ENCODE measurements at regions of chr19 and their contacts with region 1.

Region 1: GRCh38 chr19:35545001-35545911 is at the start of gene TMEM147:
- DNase-seq: peak; percentile 68 to 76 (median 73)
- H3K4me3 ChIP-seq: peak within 1 kb of the TSS; percentile 36 to 84
- H3K4me3 Mint-ChIP-seq: peak within 1 kb of the TSS; percentile 87 to 92 (median 90)
- H3K27ac ChIP-seq: peak within 1 kb of the TSS; percentile 76
- H3K27ac Mint-ChIP-seq: peak within 1 kb of the TSS; percentile 87 to 96 (median 93)
- H3K4me1 ChIP-seq: peaks cover 24% of the 10 kb centered on the region
- H3K4me1 Mint-ChIP-seq: peaks cover 23 to 46% (median 33%) of the 10 kb centered on the region in 4 donors
- H3K27me3 ChIP-seq: no peaks in the 10 kb centered on the region
- H3K27me3 Mint-ChIP-seq: no peaks in the 10 kb centered on the region
- total RNA-seq, gene TMEM147: 41.3 to 41.9 TPM

Region 2: DNA sequence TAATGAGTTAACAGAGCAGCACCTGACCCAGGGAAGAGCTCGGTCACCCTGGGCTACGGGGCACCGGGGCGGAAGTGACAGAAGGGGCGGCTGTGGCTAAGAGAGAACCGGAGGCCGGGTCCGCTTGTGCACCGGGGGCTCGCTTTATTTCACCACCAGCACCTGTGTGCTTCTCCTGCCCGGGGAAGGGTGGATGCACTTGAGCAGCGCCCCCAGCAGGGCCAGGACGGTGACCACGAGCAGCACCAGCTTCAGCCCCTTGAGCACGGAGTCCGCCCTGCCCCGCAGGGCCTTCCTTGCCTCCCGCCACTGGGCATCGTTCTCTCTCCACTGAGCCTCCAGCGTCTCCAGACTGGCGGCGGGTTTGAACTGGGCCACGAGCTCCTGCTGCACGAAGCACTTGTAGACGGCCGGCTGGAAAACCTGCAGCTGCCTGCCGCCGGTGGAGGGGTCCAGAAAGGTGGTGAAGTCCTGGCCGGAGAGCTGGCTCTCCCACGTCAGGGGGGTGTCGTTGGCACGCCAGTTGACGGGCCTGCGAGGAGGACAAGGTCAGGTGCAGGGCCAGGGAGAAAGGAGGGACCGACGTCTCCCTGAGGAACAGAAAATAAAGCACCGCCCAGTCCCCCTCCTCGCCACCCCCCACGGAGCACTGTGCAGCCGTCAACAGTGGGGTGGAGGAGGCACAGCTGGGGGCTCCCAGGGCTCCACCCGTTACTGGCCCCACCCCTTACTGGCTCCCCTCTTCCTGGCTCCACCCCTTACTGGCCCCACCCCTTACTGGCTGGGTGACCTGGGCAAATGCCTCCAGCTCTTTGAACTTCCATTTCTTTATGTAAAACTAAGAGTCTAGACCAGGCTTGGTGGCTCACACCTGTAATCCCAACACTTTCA is 320.3 kb before region 1 on chr19:
- CTCF ChIA-PET with region 1: no interaction called
- POLR2A ChIA-PET with region 1: no interaction called
- intact Hi-C with region 1: no loop called
- DNase-seq: no peak
- H3K4me3 ChIP-seq: no peak overlapping the region
- H3K4me3 Mint-ChIP-seq: no peak overlapping the region
- H3K27ac ChIP-seq: no peak overlapping the region
- H3K27ac Mint-ChIP-seq: peak overlapping the region in 2 of 7 donors; percentile 32 to 35
- H3K4me1 ChIP-seq: peaks cover 44% of the 10 kb centered on the region
- H3K4me1 Mint-ChIP-seq: peaks cover 6 to 45% (median 26%) of the 10 kb centered on the region in 4 donors
- H3K27me3 ChIP-seq: no peaks in the 10 kb centered on the region
- H3K27me3 Mint-ChIP-seq: no peaks in the 10 kb centered on the region

Region 3: GRCh38 chr19:35330475-35330874 is 214.8 kb before region 1 on chr19:
- CTCF ChIA-PET with region 1: no interaction called
- POLR2A ChIA-PET with region 1: no interaction called
- intact Hi-C with region 1: no loop called
- DNase-seq: peak in 1 of 5 donors; percentile 18
- H3K4me3 ChIP-seq: no peak overlapping the region
- H3K4me3 Mint-ChIP-seq: no peak overlapping the region
- H3K27ac ChIP-seq: no peak overlapping the region
- H3K27ac Mint-ChIP-seq: no peak overlapping the region
- H3K4me1 ChIP-seq: peaks cover 9% of the 10 kb centered on the region
- H3K4me1 Mint-ChIP-seq: peaks cover 6 to 15% (median 10%) of the 10 kb centered on the region in 4 donors
- H3K27me3 ChIP-seq: no peaks in the 10 kb centered on the region
- H3K27me3 Mint-ChIP-seq: peaks cover 7 to 22% of the 10 kb centered on the region in 2 donors

Region 4: DNA sequence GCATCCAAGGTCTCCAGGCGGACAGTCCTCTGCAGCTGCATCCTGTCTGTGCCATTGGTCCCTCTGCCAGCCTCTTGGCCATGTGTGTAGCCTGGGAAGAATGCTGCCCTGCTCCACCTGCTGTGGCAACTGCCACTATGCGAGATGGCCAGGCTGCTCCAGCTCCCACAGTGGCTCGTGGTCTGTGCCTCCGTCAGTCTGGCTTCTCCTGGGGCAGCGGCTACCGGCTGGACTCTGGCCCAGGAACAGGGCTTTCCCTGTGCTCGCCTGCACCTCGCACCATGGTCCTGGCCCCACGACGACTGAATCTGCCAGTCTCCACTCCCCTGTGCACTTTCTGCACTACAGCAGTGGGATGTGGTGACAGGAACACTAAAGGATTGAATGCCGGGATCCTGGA is 123.9 kb before region 1 on chr19:
- CTCF ChIA-PET with region 1: no interaction called
- POLR2A ChIA-PET with region 1: no interaction called
- intact Hi-C with region 1: no loop called
- DNase-seq: no peak
- H3K4me3 ChIP-seq: no peak overlapping the region
- H3K4me3 Mint-ChIP-seq: no peak overlapping the region
- H3K27ac ChIP-seq: no peak overlapping the region
- H3K27ac Mint-ChIP-seq: no peak overlapping the region
- H3K4me1 ChIP-seq: no peaks in the 10 kb centered on the region
- H3K4me1 Mint-ChIP-seq: no peaks in the 10 kb centered on the region
- H3K27me3 ChIP-seq: peaks cover 8% of the 10 kb centered on the region
- H3K27me3 Mint-ChIP-seq: peaks cover 3 to 8% of the 10 kb centered on the region in 2 donors

Region 5: DNA sequence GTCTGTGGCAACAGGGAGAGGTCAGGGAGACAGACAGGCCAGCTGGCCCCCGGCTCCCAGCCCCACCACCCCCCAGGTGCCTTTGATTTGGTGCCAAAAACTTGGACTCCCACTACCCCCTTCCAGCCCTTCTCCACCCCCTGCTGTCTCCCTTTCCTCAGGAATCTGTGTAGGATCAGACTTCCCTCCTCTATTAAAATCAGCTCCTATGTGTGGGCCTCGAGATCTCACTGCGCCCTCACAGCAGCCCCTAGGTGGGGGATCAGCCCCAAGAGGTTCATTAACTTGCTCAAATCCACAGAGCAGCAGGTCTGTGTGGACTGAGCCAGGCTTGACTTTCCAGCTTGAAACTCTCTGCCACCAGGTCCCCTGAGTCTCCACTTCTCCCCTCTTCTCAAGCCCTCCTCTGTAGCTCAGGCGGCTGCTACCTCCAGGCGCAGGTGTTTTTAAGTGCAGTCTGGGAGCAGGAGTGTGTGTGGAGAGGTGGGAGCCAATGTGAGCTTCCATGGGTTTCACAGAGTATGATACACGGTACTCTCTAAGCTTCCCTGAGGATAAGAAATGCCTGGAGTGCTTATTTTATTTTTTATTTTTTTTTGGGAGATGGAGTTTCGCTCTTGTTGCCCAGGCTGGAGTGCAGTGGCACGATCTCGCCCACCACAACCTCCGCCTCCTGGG is 10.3 kb before region 1 on chr19:
- CTCF ChIA-PET with region 1: interaction called, 13 read pairs
- POLR2A ChIA-PET with region 1: interaction called, 3 read pairs
- intact Hi-C with region 1: no loop called
- DNase-seq: no peak
- H3K4me3 ChIP-seq: no peak overlapping the region
- H3K4me3 Mint-ChIP-seq: no peak overlapping the region
- H3K27ac ChIP-seq: no peak overlapping the region
- H3K27ac Mint-ChIP-seq: peak overlapping the region in 1 of 7 donors; percentile 35
- H3K4me1 ChIP-seq: peaks cover 13% of the 10 kb centered on the region
- H3K4me1 Mint-ChIP-seq: peaks cover 7 to 17% (median 12%) of the 10 kb centered on the region in 4 donors
- H3K27me3 ChIP-seq: no peaks in the 10 kb centered on the region
- H3K27me3 Mint-ChIP-seq: peaks cover 17 to 19% of the 10 kb centered on the region in 2 donors

Region 6: DNA sequence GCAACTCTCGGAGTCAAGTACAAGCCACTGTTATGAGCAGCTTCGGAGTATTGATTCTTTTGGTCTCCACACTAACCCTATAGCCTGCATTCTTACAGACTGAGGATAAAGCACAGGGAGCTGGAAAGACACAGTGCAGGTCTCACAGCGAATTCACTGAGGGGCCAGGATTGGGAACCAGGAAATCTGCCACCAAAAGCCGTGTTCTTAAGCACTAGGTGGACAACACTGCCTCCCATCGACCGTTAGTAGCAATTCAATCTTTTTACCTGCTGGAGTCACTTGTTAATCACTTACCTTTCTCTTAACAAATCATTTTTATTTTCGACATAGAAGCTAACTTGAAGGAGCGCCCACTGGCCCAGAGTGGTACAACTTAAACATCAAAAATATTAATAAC is 47.0 kb after region 1 on chr19:
- CTCF ChIA-PET with region 1: interaction called, 13 read pairs
- POLR2A ChIA-PET with region 1: no interaction called
- intact Hi-C with region 1: no loop called
- DNase-seq: peak in 4 of 5 donors; percentile 14 to 34 (median 22)
- H3K4me3 ChIP-seq: no peak overlapping the region
- H3K4me3 Mint-ChIP-seq: no peak overlapping the region
- H3K27ac ChIP-seq: no peak overlapping the region
- H3K27ac Mint-ChIP-seq: no peak overlapping the region
- H3K4me1 ChIP-seq: no peaks in the 10 kb centered on the region
- H3K4me1 Mint-ChIP-seq: peaks cover 0 to 2% (median 1%) of the 10 kb centered on the region in 4 donors
- H3K27me3 ChIP-seq: no peaks in the 10 kb centered on the region
- H3K27me3 Mint-ChIP-seq: peaks cover 3 to 4% of the 10 kb centered on the region in 2 donors

Region 7: DNA sequence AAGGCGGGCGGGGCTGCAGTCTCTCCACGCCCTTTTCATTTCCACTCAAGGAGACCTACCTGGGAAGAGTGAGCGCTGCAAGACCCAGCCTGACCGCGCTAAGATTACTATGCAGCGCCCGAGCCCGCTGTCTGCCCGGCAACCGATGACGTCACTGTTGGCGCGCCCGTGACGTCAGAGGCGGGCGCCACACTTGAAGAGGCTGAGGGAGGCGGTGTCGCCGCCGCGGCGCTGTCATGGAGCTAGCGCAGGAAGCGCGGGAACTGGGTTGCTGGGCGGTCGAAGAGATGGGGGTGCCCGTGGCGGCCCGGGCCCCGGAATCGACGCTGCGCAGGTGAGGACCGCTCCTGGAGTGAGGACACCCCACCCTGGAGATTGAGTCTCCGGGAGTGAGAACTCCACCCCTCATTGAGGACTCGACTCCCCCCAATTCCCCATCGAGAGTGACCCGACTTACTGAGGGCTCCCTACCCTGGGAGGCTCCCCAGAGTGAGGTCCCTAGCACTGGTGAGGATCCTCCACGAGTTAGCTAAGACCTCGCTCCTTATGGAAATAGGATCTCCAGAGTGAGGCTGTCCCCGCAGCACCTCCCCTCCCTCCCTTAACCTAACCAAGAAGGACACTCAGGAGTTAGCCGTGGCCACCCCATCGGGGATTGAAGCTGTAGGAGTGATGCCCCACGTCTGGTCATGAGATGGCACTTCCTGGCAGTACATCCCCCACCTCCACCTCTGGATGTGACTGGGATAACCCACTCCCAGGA is 67.5 kb after region 1 on chr19 and contains the start of gene HAUS5:
- CTCF ChIA-PET with region 1: interaction called, 7 read pairs
- POLR2A ChIA-PET with region 1: interaction called, 3 read pairs
- intact Hi-C with region 1: loop called (anchors 1 kb)
- DNase-seq: peak; percentile 91 to 96 (median 94)
- H3K4me3 ChIP-seq: peak within 1 kb of the TSS; percentile 74 to 89
- H3K4me3 Mint-ChIP-seq: peak within 1 kb of the TSS; percentile 82 to 96 (median 86)
- H3K27ac ChIP-seq: peak within 1 kb of the TSS; percentile 72
- H3K27ac Mint-ChIP-seq: peak within 1 kb of the TSS; percentile 85 to 98 (median 95)
- H3K4me1 ChIP-seq: peaks cover 39% of the 10 kb centered on the region
- H3K4me1 Mint-ChIP-seq: peaks cover 17 to 53% (median 28%) of the 10 kb centered on the region in 4 donors
- H3K27me3 ChIP-seq: no peaks in the 10 kb centered on the region
- H3K27me3 Mint-ChIP-seq: no peaks in the 10 kb centered on the region
- total RNA-seq, gene HAUS5: 28.2 to 29.3 TPM

Region 8: DNA sequence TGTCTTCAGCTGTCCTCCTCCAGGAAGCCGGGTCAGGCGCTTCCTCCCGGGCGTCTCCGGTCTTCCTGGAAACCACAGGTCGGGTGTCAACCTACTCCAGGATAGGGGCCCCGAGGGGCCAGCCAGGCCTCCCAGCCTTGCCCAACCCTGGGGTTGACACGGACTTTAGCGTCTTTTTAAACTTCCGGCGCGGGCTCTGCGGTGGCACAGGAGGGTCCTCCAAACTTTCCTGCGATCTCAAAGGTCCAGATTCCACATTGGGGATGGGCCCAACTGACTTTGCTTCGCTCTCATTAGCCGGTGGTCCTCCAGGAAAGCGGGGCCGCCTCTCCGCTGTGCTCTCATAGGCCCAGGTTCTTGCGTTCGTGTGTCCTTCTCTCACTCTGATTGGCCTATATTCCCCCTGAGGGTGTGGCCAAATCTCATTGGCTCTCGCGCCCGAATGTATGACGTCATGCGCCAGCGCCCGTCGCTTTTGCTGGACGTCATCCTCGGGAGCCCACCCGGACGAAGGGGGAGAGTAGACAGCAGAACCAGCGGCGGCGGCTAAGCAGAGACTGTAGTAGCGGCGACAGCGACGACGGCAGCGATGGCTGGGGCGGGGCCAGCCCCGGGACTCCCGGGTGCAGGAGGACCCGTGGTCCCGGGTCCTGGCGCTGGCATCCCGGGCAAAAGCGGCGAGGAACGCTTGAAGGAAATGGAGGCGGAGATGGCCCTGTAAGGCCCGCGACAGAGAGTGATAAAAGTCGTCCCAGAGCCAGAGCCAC is 83.5 kb after region 1 on chr19 and contains the start of gene RBM42:
- CTCF ChIA-PET with region 1: interaction called, 3 read pairs
- POLR2A ChIA-PET with region 1: no interaction called
- intact Hi-C with region 1: loop called (anchors 5 kb)
- DNase-seq: peak; percentile 96 to 98 (median 97)
- H3K4me3 ChIP-seq: peak within 1 kb of the TSS; percentile 27 to 86
- H3K4me3 Mint-ChIP-seq: peak within 1 kb of the TSS; percentile 97 to 100 (median 98)
- H3K27ac ChIP-seq: peak within 1 kb of the TSS; percentile 88
- H3K27ac Mint-ChIP-seq: peak within 1 kb of the TSS; percentile 95 to 100 (median 100)
- H3K4me1 ChIP-seq: peaks cover 17% of the 10 kb centered on the region
- H3K4me1 Mint-ChIP-seq: peaks cover 13 to 35% (median 19%) of the 10 kb centered on the region in 4 donors
- H3K27me3 ChIP-seq: no peaks in the 10 kb centered on the region
- H3K27me3 Mint-ChIP-seq: peaks cover 0 to 1% of the 10 kb centered on the region in 2 donors
- total RNA-seq, gene RBM42: 53.0 to 55.8 TPM

Region 9: GRCh38 chr19:35648017-35648961 is 103.0 kb after region 1 on chr19 and contains the start of gene COX6B1:
- CTCF ChIA-PET with region 1: interaction called, 9 read pairs
- POLR2A ChIA-PET with region 1: interaction called, 6 read pairs
- intact Hi-C with region 1: loop called (anchors 5 kb)
- DNase-seq: peak; percentile 90 to 98 (median 93)
- H3K4me3 ChIP-seq: peak within 1 kb of the TSS; percentile 72 to 93
- H3K4me3 Mint-ChIP-seq: peak within 1 kb of the TSS; percentile 93 to 99 (median 98)
- H3K27ac ChIP-seq: peak within 1 kb of the TSS; percentile 86
- H3K27ac Mint-ChIP-seq: peak within 1 kb of the TSS; percentile 95 to 99 (median 97)
- H3K4me1 ChIP-seq: peaks cover 41% of the 10 kb centered on the region
- H3K4me1 Mint-ChIP-seq: peaks cover 28 to 52% (median 41%) of the 10 kb centered on the region in 4 donors
- H3K27me3 ChIP-seq: no peaks in the 10 kb centered on the region
- H3K27me3 Mint-ChIP-seq: no peaks in the 10 kb centered on the region
- total RNA-seq, gene COX6B1: 212 to 250 TPM

Region 10: DNA sequence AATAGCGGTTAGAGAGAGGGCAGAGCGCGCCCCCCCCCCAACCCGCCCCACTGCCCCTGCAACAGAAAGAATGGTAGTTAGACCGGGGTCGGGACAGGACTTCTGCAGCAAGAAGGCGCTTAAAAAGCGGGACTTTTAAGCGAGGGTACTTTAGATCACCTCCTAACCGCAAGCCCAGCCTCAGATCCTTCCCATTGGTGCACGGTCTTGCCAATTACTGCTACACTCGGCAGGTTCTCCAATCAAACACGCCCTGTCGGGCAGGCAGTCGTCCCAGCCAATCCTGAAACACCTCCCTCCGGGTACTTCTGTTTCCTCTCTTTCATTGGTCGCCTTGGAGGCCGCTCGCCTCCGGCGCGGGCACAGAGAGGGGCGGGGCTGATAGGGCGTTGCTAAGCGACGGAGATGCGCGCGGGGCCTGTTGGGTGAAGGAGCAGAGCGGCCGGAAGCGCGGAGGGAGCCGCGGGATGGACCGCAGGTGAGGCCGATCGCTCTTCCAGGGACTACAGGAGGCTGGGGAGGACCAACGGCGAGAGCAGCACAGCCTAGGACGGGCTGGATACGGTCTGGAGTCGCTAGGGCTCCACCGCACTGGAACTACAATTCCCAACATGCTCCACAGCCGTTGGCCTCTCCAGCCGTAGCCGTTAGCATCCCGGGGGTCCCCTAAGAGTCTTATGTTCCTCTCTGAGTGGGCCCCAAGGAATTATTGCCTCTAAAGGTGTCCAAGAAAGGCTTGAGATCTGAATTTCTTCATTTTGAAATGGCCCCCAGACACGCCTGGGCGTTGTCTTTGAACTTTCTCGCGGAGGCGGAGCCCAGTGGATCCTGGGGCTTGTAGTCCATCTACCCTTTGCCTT is 212.7 kb after region 1 on chr19 and contains the start of gene PROSER3:
- CTCF ChIA-PET with region 1: no interaction called
- POLR2A ChIA-PET with region 1: no interaction called
- intact Hi-C with region 1: no loop called
- DNase-seq: peak; percentile 99 to 100 (median 100)
- H3K4me3 ChIP-seq: peak within 1 kb of the TSS; percentile 90 to 91
- H3K4me3 Mint-ChIP-seq: peak within 1 kb of the TSS; percentile 94 to 100 (median 98)
- H3K27ac ChIP-seq: peak within 1 kb of the TSS; percentile 89
- H3K27ac Mint-ChIP-seq: peak within 1 kb of the TSS; percentile 94 to 99 (median 97)
- H3K4me1 ChIP-seq: peaks cover 36% of the 10 kb centered on the region
- H3K4me1 Mint-ChIP-seq: peaks cover 17 to 40% (median 27%) of the 10 kb centered on the region in 4 donors
- H3K27me3 ChIP-seq: no peaks in the 10 kb centered on the region
- H3K27me3 Mint-ChIP-seq: peaks cover 0 to 2% of the 10 kb centered on the region in 2 donors
- total RNA-seq, gene PROSER3: 45.1 to 46.5 TPM